Activated CD4-positive, alpha-beta memory T cell treated with anti-CD3 and anti-CD28 coated beads, Interleukin-2, amount 10 ng/mL, durations not matched to agents 7 days and 5 days (primary cell): ENCODE measurements at regions of chr12 and their contacts with region 1.

Region 1: DNA sequence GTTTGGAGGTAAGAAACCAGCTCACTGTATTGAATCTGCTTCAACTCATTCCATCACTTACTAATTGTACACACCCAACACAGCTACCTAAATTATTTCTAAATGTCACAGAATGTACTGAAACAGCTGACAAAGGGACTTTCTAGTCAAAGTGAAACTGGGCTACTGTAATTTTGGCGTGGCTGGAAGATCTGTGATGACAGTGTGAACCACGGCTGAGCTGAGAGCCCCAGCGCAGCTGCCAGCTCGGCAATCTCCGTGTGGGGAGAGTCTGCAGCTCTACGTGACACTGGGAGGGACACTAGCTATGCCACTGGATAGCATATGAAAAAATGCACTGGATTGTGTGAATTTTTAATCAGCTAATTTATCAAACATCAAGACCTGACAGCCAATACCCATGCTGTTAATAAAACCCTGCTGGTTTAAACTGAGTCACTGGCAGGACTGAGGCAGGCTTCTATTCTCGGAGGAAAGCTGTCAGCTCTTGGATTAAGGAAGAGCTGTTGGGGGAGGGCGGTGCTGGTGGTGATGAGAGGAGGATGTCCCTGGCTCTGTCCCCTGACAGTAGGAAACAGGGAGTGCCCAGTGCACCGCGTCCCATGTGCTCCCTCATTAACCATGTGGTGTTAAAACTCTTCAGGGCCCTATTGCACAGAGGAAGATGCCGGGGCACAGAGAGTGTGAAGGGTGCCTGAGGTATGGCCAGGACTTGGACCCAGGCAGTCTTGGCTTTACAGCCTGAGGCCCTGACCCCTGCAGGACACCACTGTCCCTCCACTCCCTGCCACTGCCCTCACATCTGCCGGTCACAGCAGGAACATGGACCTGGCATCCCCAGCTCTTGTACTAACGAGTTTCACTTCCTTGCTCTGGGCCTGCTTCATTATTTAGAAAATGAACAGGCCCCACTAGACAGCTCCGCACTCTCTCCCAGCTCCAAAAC is 13.3 kb downstream of the SLC15A4 start:
- DNase-seq: no peak
- H3K4me3 Mint-ChIP-seq: no peak overlapping the region
- H3K27ac Mint-ChIP-seq: peak overlapping the region; percentile 3
- H3K4me1 Mint-ChIP-seq: peaks cover 28% of the 10 kb centered on the region
- H3K27me3 Mint-ChIP-seq: no peaks in the 10 kb centered on the region

Region 2: GRCh38 chr12:128771681-128772080 is 38.8 kb before region 1 on chr12:
- CTCF ChIA-PET with region 1: no interaction called
- POLR2A ChIA-PET with region 1: no interaction called
- DNase-seq: no peak
- H3K4me3 Mint-ChIP-seq: no peak overlapping the region
- H3K27ac Mint-ChIP-seq: no peak overlapping the region
- H3K4me1 Mint-ChIP-seq: no peaks in the 10 kb centered on the region
- H3K27me3 Mint-ChIP-seq: no peaks in the 10 kb centered on the region

Region 3: DNA sequence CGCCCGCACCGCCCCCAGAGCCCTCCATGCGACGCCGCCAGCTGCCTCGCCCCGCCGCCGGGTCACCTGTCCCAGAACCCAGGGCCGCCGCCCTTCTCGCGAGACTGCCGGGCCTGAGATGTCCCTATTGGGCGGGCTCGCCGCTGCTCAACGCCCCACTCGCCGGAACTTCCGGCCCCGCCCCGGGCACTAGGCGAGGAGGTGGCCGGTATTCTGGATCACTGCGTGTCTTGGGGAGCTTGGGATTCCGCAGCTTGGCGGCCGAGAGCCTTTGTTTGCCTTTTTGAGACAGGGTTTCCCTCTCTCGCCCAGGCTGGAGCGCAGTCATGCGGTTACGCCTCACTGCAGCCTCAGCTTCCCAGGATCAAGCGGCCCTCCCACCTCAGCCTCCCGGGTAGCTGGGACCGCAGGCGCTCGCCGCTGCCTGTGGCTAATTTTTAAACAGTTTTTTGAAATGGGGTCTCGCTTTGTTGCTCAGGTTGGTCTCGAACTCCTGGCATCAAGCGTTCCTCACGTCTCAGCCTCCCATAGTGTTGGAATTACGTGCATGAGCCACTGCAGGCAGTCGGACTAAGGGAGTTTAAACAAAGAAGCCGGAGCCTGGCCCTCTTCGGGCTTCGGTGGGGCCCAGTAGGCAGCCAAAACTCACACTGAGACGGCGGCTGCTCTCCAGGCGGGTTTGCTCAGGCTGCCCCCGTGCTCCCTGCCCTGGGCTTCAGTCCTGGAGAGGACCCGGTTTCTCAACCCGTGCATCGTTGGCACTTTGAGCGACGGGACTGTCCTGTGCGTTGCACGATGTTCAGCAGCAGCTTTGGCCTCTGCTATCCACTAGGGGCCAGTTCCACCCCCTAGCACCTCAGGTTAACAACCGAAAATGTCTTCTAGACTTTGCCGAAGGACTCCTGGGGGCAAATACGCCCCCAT is 13.7 kb after region 1 on chr12 and contains the start of gene SLC15A4:
- CTCF ChIA-PET with region 1: interaction called, 6 read pairs
- POLR2A ChIA-PET with region 1: interaction called, 23 read pairs
- DNase-seq: peak; percentile 96
- H3K4me3 Mint-ChIP-seq: peak within 1 kb of the TSS; percentile 81
- H3K27ac Mint-ChIP-seq: peak within 1 kb of the TSS; percentile 73
- H3K4me1 Mint-ChIP-seq: peaks cover 34% of the 10 kb centered on the region
- H3K27me3 Mint-ChIP-seq: peaks cover 3% of the 10 kb centered on the region
- total RNA-seq, gene SLC15A4: 23.5 to 24.5 TPM